ENCODE measurements at regions of chr5 and their contacts with region 1.

Region 1: DNA sequence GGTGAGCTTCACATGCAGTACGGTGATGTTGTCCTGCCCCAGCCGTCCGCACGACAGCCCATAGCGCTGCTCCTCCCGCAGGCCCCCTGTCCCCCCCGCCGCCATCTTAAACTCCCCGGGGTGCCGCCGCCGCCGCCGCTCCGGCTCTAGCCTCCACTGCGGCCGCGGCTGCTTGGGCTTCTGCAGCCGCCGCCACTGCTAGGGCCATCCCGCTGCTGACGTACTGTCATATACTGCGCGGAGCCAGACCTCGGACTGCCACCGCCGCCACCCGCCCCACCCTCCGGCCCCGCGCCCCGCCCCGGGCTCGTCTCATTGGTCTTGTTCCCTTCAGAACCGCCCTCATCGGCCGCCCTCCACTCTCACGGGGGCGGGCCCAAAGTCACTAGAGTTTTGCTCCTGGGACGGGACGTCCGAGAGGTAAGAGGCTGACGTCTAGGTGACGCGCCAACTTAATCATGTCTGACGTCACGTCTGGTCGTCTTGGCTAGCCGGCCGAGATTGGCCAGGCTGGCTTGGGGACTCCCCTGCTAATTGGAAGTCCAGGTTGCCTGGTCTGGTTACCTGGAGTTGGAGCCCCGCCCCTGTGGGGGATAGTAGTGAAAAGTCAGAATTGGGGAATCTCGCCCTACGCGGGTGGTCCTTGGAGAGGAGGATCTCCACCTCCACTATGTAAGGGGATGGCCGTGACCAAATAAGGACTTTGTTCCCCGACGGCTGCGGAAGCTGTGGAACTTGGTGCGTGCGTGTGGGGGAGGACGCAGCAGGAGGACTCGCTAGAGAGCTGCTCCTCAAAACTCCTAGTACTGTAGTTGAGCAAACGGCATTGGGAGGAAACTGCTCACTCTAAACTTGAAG is at the start of gene ELL2:
- DNase-seq: peak; percentile 93
- ATAC-seq: peak; percentile 78
- H3K4me3 ChIP-seq: peak within 1 kb of the TSS; percentile 99
- H3K27ac ChIP-seq: peak within 1 kb of the TSS; percentile 82
- H3K4me1 ChIP-seq: peaks cover 72% of the 10 kb centered on the region
- H3K27me3 ChIP-seq: no peaks in the 10 kb centered on the region
- CTCF ChIP-seq: no peak
- total RNA-seq, gene ELL2: 72.2 and 82.4 TPM in 2 replicates

Region 2: GRCh38 chr5:95858661-95859326 is 103.1 kb before region 1 on chr5:
- CTCF ChIA-PET with region 1: no interaction called
- POLR2A ChIA-PET with region 1: no interaction called
- intact Hi-C with region 1: loop called (anchors 1 kb)
- DNase-seq: peak; percentile 93
- ATAC-seq: peak; percentile 68
- H3K4me3 ChIP-seq: peak overlapping the region; percentile 56
- H3K27ac ChIP-seq: peak overlapping the region; percentile 99
- H3K4me1 ChIP-seq: peaks cover 49% of the 10 kb centered on the region
- H3K27me3 ChIP-seq: no peaks in the 10 kb centered on the region
- CTCF ChIP-seq: peak; percentile 91

Region 3: DNA sequence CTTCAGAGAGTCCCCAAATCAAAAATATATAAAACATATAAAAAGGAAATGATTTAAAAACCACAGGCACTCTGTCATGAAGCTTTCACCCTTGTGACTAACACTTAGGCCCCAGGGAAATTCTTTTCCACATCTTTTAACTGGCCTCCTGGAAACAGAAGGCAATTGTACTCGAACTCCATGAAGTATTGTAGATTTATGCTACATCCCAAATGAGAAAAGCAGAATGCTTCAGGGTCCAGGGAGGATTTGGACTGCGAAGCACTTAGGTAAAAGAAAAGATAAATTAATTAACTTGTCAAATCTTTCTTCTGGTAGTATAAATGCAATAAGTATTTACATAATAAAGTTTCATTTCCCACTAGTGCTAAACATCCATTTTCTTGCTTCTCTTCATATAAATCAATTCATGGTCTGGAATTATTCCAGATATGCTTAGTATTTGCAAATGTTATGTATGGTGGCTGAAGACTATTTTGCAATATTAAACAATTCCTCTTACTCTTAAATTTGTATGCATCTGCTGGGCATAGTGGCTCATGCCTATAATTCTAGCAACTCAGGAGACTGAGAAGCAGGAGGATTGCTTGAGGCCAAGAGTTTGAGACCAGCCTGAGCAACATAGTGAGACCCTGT is 64.7 kb after region 1 on chr5:
- CTCF ChIA-PET with region 1: no interaction called
- POLR2A ChIA-PET with region 1: no interaction called
- intact Hi-C with region 1: loop called (anchors 2 kb)
- DNase-seq: peak; percentile 82
- ATAC-seq: peak; percentile 84
- H3K4me3 ChIP-seq: peak overlapping the region; percentile 2; the same call in 1 of the 2 replicates
- H3K27ac ChIP-seq: peak overlapping the region; percentile 80
- H3K4me1 ChIP-seq: peaks cover 61% of the 10 kb centered on the region
- H3K27me3 ChIP-seq: no peaks in the 10 kb centered on the region
- CTCF ChIP-seq: no peak

Region 4: DNA sequence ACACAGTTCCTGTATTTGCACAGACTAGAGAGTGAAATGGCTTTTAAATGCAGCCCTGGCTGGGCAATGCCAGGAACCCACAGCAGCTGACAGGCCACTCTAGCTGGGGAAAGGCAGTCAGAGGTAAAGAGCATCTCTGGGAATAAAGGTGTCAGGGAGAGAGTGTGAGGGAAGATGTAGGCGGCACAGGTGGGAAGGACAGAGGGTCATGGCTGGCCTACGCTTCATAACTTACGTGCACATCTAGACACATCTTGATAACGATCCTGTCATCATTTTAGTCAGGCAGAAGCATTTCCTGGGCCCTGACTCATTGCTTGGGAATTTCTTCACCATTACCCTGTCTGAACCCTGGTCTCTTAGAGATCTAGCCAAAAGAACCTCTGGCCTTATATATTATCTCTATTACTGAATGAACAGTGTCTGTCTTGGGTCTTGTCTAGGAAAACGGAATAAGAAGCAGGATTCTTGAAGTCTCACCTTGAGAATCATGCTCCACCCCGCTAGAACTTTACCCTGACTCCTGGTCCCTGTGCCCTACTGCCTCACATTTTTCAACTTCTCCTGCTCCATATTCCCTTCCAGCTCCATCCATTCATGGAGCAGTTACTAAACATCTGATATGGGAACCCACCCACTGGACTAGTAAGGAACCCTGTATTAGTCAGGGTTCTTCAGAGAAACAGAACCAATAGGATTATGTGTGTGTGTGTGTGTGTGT is 106.2 kb after region 1 on chr5:
- CTCF ChIA-PET with region 1: no interaction called
- POLR2A ChIA-PET with region 1: no interaction called
- intact Hi-C with region 1: loop called (anchors 1 kb)
- DNase-seq: peak; percentile 90
- ATAC-seq: peak; percentile 84
- H3K4me3 ChIP-seq: peak overlapping the region; percentile 53
- H3K27ac ChIP-seq: peak overlapping the region; percentile 72
- H3K4me1 ChIP-seq: peaks cover 47% of the 10 kb centered on the region
- H3K27me3 ChIP-seq: no peaks in the 10 kb centered on the region
- CTCF ChIP-seq: no peak

Region 5: DNA sequence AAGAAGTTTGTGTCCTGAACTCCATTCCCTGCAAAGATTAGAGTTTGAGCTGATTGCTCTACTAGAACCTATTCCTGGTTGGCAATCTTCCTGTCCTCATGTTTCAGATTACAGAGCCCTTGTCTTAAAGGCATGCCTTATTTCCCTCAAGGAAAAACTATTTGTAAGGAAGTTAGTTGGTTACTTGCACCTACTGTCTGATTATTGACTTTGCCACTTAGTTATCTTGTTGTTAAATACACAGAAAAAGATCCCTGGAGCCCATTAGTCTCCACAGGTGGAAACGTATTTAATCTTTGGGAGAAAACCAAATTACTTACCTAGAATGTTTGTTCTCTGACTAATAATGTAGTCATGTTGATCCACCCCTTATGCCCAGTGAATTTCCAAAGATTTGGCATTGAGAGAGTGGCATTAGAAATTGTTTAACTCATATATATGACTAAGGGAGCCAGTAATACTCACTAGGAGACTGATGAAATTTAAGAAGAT is 132.1 kb after region 1 on chr5:
- CTCF ChIA-PET with region 1: no interaction called
- POLR2A ChIA-PET with region 1: no interaction called
- intact Hi-C with region 1: loop called (anchors 2 kb)
- DNase-seq: peak; percentile 95
- ATAC-seq: peak; percentile 90
- H3K4me3 ChIP-seq: no peak overlapping the region
- H3K27ac ChIP-seq: peak overlapping the region; percentile 85
- H3K4me1 ChIP-seq: peaks cover 43% of the 10 kb centered on the region
- H3K27me3 ChIP-seq: no peaks in the 10 kb centered on the region
- CTCF ChIP-seq: no peak

Region 6: GRCh38 chr5:96256778-96257470 is 295.1 kb after region 1 on chr5:
- CTCF ChIA-PET with region 1: interaction called, 3 read pairs
- POLR2A ChIA-PET with region 1: no interaction called
- intact Hi-C with region 1: loop called (anchors 1 kb)
- DNase-seq: peak; percentile 41
- ATAC-seq: no peak
- H3K4me3 ChIP-seq: no peak overlapping the region
- H3K27ac ChIP-seq: no peak overlapping the region
- H3K4me1 ChIP-seq: peaks cover 77% of the 10 kb centered on the region
- H3K27me3 ChIP-seq: no peaks in the 10 kb centered on the region
- CTCF ChIP-seq: 0 out of 2 replicates have a peak, but pooled peaks have one; percentile 13

Region 7: GRCh38 chr5:96324708-96325107 is 362.9 kb after region 1 on chr5:
- CTCF ChIA-PET with region 1: no interaction called
- POLR2A ChIA-PET with region 1: interaction called, 13 read pairs
- intact Hi-C with region 1: loop called (anchors 5 kb)
- DNase-seq: peak; percentile 97
- ATAC-seq: peak; percentile 93
- H3K4me3 ChIP-seq: no peak overlapping the region
- H3K27ac ChIP-seq: peak overlapping the region; percentile 70
- H3K4me1 ChIP-seq: peaks cover 28% of the 10 kb centered on the region
- H3K27me3 ChIP-seq: no peaks in the 10 kb centered on the region
- CTCF ChIP-seq: no peak

Measured in PC-3 (cell line).